Naive thymus-derived CD4-positive, alpha-beta T cell (primary cell): ENCODE measurements at regions of chr6 and their contacts with region 1.

Region 1: GRCh38 chr6:117602151-117602898 is at the start of gene GOPC:
- DNase-seq: peak; percentile 87 to 97 (median 96)
- ATAC-seq: peak; percentile 97
- H3K4me3 ChIP-seq: peak within 1 kb of the TSS; percentile 93
- H3K4me3 Mint-ChIP-seq: peak within 1 kb of the TSS; percentile 96 to 100 (median 99)
- H3K27ac ChIP-seq: peak within 1 kb of the TSS; percentile 92
- H3K27ac Mint-ChIP-seq: peak within 1 kb of the TSS; percentile 94 to 99 (median 99)
- H3K4me1 ChIP-seq: peaks cover 0 to 9% of the 10 kb centered on the region in 2 donors
- H3K4me1 Mint-ChIP-seq: peaks cover 24 to 58% (median 49%) of the 10 kb centered on the region in 7 donors
- H3K27me3 ChIP-seq: no peaks in the 10 kb centered on the region
- H3K27me3 Mint-ChIP-seq: peaks cover 0 to 5% (median 4%) of the 10 kb centered on the region in 5 donors
- total RNA-seq, gene GOPC: 16.2 to 39.4 (median 26.5) TPM

Region 2: DNA sequence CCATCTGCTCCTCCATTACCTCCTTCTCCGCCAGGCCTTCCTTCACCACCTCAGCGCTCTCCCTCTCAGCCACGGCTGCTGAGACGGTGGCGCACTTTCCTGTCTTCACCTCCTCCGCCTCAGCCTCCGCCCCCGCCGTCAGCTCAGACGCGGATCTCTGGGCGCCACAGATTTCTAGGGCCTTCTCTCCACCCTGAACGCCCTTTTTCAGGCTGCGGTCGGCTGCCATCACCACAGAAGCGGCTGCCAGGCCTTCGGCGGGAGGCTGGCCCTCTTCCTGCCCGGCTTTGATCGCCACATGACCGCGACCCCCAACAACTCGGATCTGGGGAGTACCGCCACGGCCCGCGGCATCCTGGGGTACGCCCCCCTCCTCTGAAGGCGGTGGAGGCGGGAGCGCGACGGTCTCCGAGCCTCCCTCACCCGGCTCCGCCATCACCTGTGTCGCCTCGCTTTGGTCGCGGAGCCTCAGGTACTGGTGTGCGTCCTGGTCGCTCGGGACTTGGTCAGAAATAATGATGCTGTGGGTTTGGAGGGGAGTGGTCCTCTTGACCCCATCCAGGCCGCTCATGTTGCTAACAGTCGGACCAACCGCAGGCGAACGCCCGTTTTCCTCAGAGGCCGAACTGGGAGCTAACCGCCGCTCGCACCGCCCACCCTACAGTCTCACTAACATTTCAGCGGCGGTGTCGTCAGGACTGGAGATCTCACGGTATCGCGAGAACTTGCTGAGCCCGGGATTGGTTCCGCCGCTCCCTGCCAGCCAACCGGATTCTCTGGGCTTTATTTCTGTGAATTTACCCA is 1322.9 kb before region 1 on chr6 and contains the start of gene TSPYL1:
- CTCF ChIA-PET with region 1: no interaction called
- POLR2A ChIA-PET with region 1: no interaction called
- intact Hi-C with region 1: loop called (anchors 1 to 2 kb)
- DNase-seq: peak; percentile 85 to 98 (median 96)
- ATAC-seq: peak; percentile 92
- H3K4me3 ChIP-seq: peak within 1 kb of the TSS; percentile 86
- H3K4me3 Mint-ChIP-seq: peak within 1 kb of the TSS; percentile 96 to 100 (median 98)
- H3K27ac ChIP-seq: peak within 1 kb of the TSS; percentile 99
- H3K27ac Mint-ChIP-seq: peak within 1 kb of the TSS; percentile 98 to 100 (median 100)
- H3K4me1 ChIP-seq: peaks cover 39 to 43% of the 10 kb centered on the region in 2 donors
- H3K4me1 Mint-ChIP-seq: peaks cover 37 to 73% (median 54%) of the 10 kb centered on the region in 7 donors
- H3K27me3 ChIP-seq: no peaks in the 10 kb centered on the region
- H3K27me3 Mint-ChIP-seq: peaks cover 0 to 6% (median 0%) of the 10 kb centered on the region in 5 donors
- total RNA-seq, gene TSPYL1: 42.8 to 226 (median 104) TPM

Region 3: GRCh38 chr6:116969211-116969863 is 633.0 kb before region 1 on chr6:
- CTCF ChIA-PET with region 1: no interaction called
- POLR2A ChIA-PET with region 1: no interaction called
- intact Hi-C with region 1: loop called in 1 of 2 experiments (anchors 2 kb)
- DNase-seq: peak in 3 of 9 donors; percentile 5 to 8 (median 7)
- ATAC-seq: peak; percentile 45
- H3K4me3 ChIP-seq: no peak overlapping the region
- H3K4me3 Mint-ChIP-seq: no peak overlapping the region
- H3K27ac ChIP-seq: no peak overlapping the region
- H3K27ac Mint-ChIP-seq: no peak overlapping the region
- H3K4me1 ChIP-seq: no peaks in the 10 kb centered on the region
- H3K4me1 Mint-ChIP-seq: no peaks in the 10 kb centered on the region
- H3K27me3 ChIP-seq: peaks cover 0 to 3% of the 10 kb centered on the region in 2 donors
- H3K27me3 Mint-ChIP-seq: peaks cover 2 to 12% (median 4%) of the 10 kb centered on the region in 5 donors

Region 4: DNA sequence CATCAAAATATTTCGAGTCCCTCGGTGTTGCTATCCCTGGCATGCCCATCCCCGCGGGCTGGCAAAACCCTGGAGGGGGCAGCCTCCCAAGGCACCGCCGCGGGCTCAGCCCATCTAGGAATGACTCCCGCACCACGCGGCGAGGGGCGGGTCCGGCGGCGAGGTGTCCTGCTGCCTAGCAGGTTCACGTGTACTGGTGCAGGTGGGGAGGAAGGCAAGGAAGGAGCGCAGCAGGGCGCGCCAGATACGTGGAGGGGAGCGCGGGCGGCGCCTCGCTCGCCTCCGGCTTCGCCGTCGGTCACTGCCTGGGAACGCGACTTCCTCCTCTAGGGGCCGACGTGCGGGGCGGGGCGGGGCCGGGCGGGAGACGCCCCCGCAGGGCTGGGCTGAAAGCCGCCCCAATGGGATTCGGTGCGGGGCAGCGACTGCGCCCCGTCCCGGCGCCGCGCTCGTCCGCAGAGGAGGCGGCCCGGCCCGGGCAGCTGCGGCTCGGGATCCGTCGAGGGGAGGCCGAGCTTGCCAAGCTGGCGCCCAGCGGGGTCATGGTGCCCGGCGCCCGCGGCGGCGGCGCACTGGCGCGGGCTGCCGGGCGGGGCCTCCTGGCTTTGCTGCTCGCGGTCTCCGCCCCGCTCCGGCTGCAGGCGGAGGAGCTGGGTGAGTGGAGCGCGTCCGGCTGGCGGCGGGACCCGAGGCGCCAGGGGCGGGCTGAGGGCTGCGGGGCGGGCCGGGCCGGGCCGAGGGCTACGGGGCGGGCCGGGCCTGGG is 119.9 kb before region 1 on chr6 and contains the start of gene DCBLD1:
- CTCF ChIA-PET with region 1: interaction called, 12 read pairs
- POLR2A ChIA-PET with region 1: no interaction called
- intact Hi-C with region 1: loop called (anchors 1 kb)
- DNase-seq: peak in 8 of 9 donors; percentile 32 to 72 (median 36)
- ATAC-seq: peak; percentile 85
- H3K4me3 ChIP-seq: peak within 1 kb of the TSS; percentile 63
- H3K4me3 Mint-ChIP-seq: peak within 1 kb of the TSS; percentile 87 to 96 (median 91)
- H3K27ac ChIP-seq: no peak within 1 kb of the TSS
- H3K27ac Mint-ChIP-seq: peak within 1 kb of the TSS in 7 of 9 donors; percentile 28 to 84 (median 65)
- H3K4me1 ChIP-seq: peaks cover 8 to 10% of the 10 kb centered on the region in 2 donors
- H3K4me1 Mint-ChIP-seq: peaks cover 15 to 18% (median 16%) of the 10 kb centered on the region in 7 donors
- H3K27me3 ChIP-seq: no peaks in the 10 kb centered on the region
- H3K27me3 Mint-ChIP-seq: peaks cover 45 to 66% (median 53%) of the 10 kb centered on the region in 5 donors
- total RNA-seq, gene DCBLD1: 1.5 to 7.6 (median 5.6) TPM

Region 5: DNA sequence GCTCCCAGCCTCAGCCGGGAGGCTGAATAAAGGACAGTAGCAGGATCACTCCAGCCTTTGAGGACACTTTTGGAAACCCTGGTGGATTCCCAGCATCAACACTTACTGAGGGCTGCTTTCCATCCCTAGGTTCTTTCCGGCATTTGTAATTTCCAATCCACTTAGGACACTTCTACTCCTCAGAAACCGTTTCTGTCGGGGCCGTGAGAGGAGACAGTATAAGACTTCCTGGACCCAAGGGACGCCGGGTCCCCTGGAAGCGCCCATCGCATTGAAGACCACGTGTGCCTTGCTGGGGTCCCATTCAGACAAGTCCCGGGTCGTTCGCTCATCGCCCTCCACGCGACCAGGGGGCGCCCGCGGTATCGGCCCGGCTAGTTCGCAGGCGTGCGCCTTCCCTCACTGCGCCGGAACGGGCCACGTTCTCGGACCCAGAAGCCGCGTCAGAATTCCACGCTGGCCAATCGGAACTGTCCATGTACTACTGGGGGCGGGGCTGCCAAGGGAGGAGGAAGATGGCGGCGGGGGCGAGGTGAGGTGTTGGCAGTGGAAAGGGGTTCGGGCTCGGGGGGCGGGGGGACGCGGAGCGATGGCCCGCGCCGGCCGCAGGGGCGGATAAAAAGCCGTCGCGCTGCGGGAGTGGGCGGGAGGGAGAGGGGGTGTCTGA is 72.8 kb after region 1 on chr6 and contains the start of gene NUS1:
- CTCF ChIA-PET with region 1: no interaction called
- POLR2A ChIA-PET with region 1: no interaction called
- intact Hi-C with region 1: loop called (anchors 1 kb)
- DNase-seq: peak; percentile 92 to 98 (median 96)
- ATAC-seq: peak; percentile 98
- H3K4me3 ChIP-seq: peak within 1 kb of the TSS; percentile 95
- H3K4me3 Mint-ChIP-seq: peak within 1 kb of the TSS; percentile 85 to 98 (median 94)
- H3K27ac ChIP-seq: peak within 1 kb of the TSS; percentile 74
- H3K27ac Mint-ChIP-seq: peak within 1 kb of the TSS; percentile 81 to 98 (median 91)
- H3K4me1 ChIP-seq: peaks cover 24 to 28% of the 10 kb centered on the region in 2 donors
- H3K4me1 Mint-ChIP-seq: peaks cover 37 to 57% (median 53%) of the 10 kb centered on the region in 7 donors
- H3K27me3 ChIP-seq: no peaks in the 10 kb centered on the region
- H3K27me3 Mint-ChIP-seq: peaks cover 0 to 2% (median 0%) of the 10 kb centered on the region in 5 donors
- total RNA-seq, gene NUS1: 19.6 to 37.6 (median 33.2) TPM

Region 6: GRCh38 chr6:117711369-117711768 is 109.0 kb after region 1 on chr6:
- CTCF ChIA-PET with region 1: no interaction called
- POLR2A ChIA-PET with region 1: no interaction called
- intact Hi-C with region 1: no loop called
- DNase-seq: peak in 1 of 9 donors; percentile 4
- ATAC-seq: no peak
- H3K4me3 ChIP-seq: no peak overlapping the region
- H3K4me3 Mint-ChIP-seq: no peak overlapping the region
- H3K27ac ChIP-seq: no peak overlapping the region
- H3K27ac Mint-ChIP-seq: no peak overlapping the region
- H3K4me1 ChIP-seq: no peaks in the 10 kb centered on the region
- H3K4me1 Mint-ChIP-seq: peaks cover 0 to 4% (median 0%) of the 10 kb centered on the region in 7 donors
- H3K27me3 ChIP-seq: no peaks in the 10 kb centered on the region
- H3K27me3 Mint-ChIP-seq: no peaks in the 10 kb centered on the region

Region 7: GRCh38 chr6:118283766-118284165 is 681.4 kb after region 1 on chr6:
- CTCF ChIA-PET with region 1: no interaction called
- POLR2A ChIA-PET with region 1: no interaction called
- intact Hi-C with region 1: no loop called
- DNase-seq: peak in 7 of 9 donors; percentile 12 to 69 (median 59)
- ATAC-seq: peak; percentile 68
- H3K4me3 ChIP-seq: no peak overlapping the region
- H3K4me3 Mint-ChIP-seq: no peak overlapping the region
- H3K27ac ChIP-seq: no peak overlapping the region
- H3K27ac Mint-ChIP-seq: peak overlapping the region in 1 of 9 donors; percentile 40
- H3K4me1 ChIP-seq: no peaks in the 10 kb centered on the region
- H3K4me1 Mint-ChIP-seq: peaks cover 0 to 7% (median 0%) of the 10 kb centered on the region in 7 donors
- H3K27me3 ChIP-seq: no peaks in the 10 kb centered on the region
- H3K27me3 Mint-ChIP-seq: peaks cover 6 to 38% (median 14%) of the 10 kb centered on the region in 5 donors

Region 8: DNA sequence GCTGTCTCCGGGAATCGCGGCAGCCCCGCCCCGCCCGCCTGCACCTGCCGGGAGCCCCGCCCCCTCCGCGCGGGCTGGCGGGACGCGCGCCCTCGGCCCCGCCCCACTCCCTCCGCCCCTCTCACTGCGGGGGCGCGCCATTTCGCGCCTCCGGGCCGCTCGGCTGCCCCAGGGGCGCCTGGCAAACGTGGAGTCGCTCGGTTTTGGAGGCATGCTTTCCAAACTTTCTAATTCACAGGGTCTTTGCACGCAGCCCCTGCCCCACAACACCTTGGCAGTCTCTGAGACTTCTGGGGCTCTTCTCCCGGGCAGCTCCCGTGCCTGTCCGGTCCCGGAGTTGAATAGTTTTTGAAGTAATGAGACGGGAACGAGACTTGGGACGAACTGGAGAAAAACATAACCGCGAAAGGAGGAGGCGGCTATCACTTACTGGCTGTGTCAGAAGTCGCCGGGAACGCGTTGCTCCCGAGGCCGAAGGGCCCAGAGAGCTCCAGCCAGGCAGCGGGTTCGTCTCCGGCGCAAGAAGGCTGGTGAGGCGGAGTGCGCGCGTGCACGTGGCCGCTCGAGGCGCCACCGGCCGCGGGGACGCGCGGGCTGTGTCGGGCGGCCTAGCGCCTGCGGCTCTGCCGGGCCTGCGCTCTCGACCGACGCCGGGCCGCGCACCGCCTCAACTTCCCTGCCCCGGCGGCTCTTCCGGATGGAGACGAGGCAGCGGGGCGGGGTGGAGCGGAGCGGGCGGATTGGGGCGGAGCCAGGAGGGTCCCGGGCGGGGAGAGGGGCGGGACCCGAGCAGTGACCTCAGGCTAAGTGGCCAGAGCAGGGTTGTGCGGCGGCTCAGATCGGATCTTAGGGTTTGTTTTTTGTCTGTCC is 1332.4 kb after region 1 on chr6 and contains the start of gene MCM9:
- CTCF ChIA-PET with region 1: no interaction called
- POLR2A ChIA-PET with region 1: no interaction called
- intact Hi-C with region 1: loop called in 1 of 2 experiments (anchors 1 kb)
- DNase-seq: peak; percentile 77 to 93 (median 86)
- ATAC-seq: peak; percentile 92
- H3K4me3 ChIP-seq: peak within 1 kb of the TSS; percentile 98
- H3K4me3 Mint-ChIP-seq: peak within 1 kb of the TSS; percentile 86 to 96 (median 91)
- H3K27ac ChIP-seq: peak within 1 kb of the TSS; percentile 95
- H3K27ac Mint-ChIP-seq: peak within 1 kb of the TSS; percentile 86 to 95 (median 93)
- H3K4me1 ChIP-seq: peaks cover 4 to 8% of the 10 kb centered on the region in 2 donors
- H3K4me1 Mint-ChIP-seq: peaks cover 22 to 47% (median 41%) of the 10 kb centered on the region in 7 donors
- H3K27me3 ChIP-seq: no peaks in the 10 kb centered on the region
- H3K27me3 Mint-ChIP-seq: no peaks in the 10 kb centered on the region
- total RNA-seq, gene MCM9: 21.8 to 33.7 (median 31.1) TPM